ENCODE measurements at regions of chr3 and their contacts with region 1.

Region 1: GRCh38 chr3:196711838-196712513 is at the starts of genes CEP19 and PIGX:
- DNase-seq: peak; percentile 90
- H3K4me3 Mint-ChIP-seq: peak within 1 kb of the TSS; percentile 95
- H3K27ac Mint-ChIP-seq: peak within 1 kb of the TSS; percentile 97
- H3K4me1 Mint-ChIP-seq: peaks cover 32% of the 10 kb centered on the region
- H3K27me3 Mint-ChIP-seq: no peaks in the 10 kb centered on the region
- total RNA-seq, gene CEP19: 3.7 and 4.5 TPM in 2 replicates
- total RNA-seq, gene PIGX: 65.7 and 70.8 TPM in 2 replicates

Region 2: GRCh38 chr3:196632046-196632751 is 79.8 kb before region 1 on chr3:
- intact Hi-C with region 1: loop called (anchors 2 kb)
- DNase-seq: peak; percentile 97
- H3K4me3 Mint-ChIP-seq: peak overlapping the region; percentile 87
- H3K27ac Mint-ChIP-seq: peak overlapping the region; percentile 97
- H3K4me1 Mint-ChIP-seq: peaks cover 54% of the 10 kb centered on the region
- H3K27me3 Mint-ChIP-seq: no peaks in the 10 kb centered on the region

Region 3: DNA sequence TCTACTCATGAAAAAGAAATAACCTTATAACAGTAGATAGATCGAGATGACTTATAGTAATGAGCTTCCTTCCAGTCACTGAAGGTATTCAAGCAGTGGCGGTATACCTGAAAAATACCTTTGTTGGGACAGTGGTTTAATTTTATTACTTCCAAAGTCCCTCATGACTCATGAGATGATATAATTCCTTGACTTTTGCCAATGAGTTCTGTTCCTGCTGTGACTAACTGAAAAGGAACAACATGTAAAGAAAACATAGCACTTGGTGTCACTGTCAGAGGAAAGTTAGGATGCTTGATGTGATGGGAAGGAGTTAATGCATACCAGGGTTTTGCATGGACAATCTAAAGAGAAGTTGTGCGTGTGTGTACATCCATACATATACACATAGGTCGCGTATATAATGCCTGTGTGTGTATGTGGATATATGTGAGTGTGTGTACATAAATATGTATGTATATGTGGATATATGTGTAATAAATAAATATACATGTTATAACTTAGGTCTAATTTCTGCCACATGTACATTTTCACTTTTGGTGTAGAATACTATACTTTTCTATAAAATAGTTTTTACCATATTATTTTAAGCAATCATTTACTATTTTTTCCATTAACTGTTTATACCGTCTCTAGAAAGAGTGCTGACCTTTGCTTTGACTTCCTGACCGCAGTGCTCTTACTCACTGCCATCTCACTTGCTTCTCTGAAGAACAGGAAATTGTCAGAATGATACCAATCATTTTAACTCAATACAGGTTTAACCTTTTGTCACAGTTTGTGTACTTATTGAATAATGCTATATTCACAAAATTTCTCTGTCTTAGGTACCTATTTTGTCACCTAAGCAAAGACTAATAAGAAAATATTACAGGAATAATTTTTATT is 15.1 kb after region 1 on chr3:
- intact Hi-C with region 1: loop called (anchors 2 kb)
- DNase-seq: no peak
- H3K4me3 Mint-ChIP-seq: no peak overlapping the region
- H3K27ac Mint-ChIP-seq: peak overlapping the region; percentile 65
- H3K4me1 Mint-ChIP-seq: peaks cover 40% of the 10 kb centered on the region
- H3K27me3 Mint-ChIP-seq: no peaks in the 10 kb centered on the region